Calu3 (cell line): ENCODE measurements at regions of chr15 and their contacts with region 1.

Region 1: GRCh38 chr15:84108728-84109127 is 126.8 kb upstream of the GOLGA6L4 start:
- DNase-seq: no peak
- H3K4me3 Mint-ChIP-seq: no peak overlapping the region
- H3K27ac Mint-ChIP-seq: no peak overlapping the region
- H3K4me1 Mint-ChIP-seq: peaks cover 9% of the 10 kb centered on the region
- H3K27me3 Mint-ChIP-seq: peaks cover 5% of the 10 kb centered on the region
- CTCF ChIP-seq: no peak

Region 2: GRCh38 chr15:82231842-82232241 is 1876.9 kb before region 1 on chr15:
- CTCF ChIA-PET with region 1: no interaction called
- intact Hi-C with region 1: loop called (anchors 10 kb)
- DNase-seq: no peak
- H3K4me3 Mint-ChIP-seq: no peak overlapping the region
- H3K27ac Mint-ChIP-seq: no peak overlapping the region
- H3K4me1 Mint-ChIP-seq: no peaks in the 10 kb centered on the region
- H3K27me3 Mint-ChIP-seq: no peaks in the 10 kb centered on the region
- CTCF ChIP-seq: no peak

Region 3: DNA sequence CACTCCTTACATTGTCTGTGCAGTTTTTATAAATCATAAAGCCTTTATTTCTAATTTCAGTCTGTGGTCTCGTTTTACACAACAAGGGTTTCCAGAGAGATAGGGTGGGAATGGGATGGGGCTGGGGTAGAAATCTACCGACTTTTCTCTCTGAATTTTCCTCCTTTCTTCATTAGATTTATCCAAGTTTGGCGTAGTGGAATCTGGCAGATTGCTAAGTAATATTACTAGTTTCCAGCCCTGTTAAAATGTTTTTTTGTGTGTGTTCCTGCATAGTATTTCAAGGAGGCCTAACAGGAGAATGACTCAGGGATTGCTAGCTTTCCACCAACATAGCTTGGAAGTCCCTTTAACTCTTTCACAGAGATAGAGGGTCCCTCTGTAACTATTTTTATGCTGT is 58.7 kb before region 1 on chr15:
- CTCF ChIA-PET with region 1: no interaction called
- intact Hi-C with region 1: no loop called
- DNase-seq: no peak
- H3K4me3 Mint-ChIP-seq: no peak overlapping the region
- H3K27ac Mint-ChIP-seq: no peak overlapping the region
- H3K4me1 Mint-ChIP-seq: no peaks in the 10 kb centered on the region
- H3K27me3 Mint-ChIP-seq: no peaks in the 10 kb centered on the region
- CTCF ChIP-seq: no peak

Region 4: GRCh38 chr15:85582131-85583079 is 1473.7 kb after region 1 on chr15:
- CTCF ChIA-PET with region 1: no interaction called
- intact Hi-C with region 1: no loop called
- DNase-seq: peak; percentile 45
- H3K4me3 Mint-ChIP-seq: peak overlapping the region; percentile 75
- H3K27ac Mint-ChIP-seq: peak overlapping the region; percentile 76
- H3K4me1 Mint-ChIP-seq: peaks cover 77% of the 10 kb centered on the region
- H3K27me3 Mint-ChIP-seq: no peaks in the 10 kb centered on the region
- CTCF ChIP-seq: no peak